ENCODE measurements at regions of chr1 and their contacts with region 1.

Region 1: GRCh38 chr1:101288491-101288944 is 51.7 kb downstream of the S1PR1 start:
- DNase-seq: peak; percentile 60
- H3K4me3 ChIP-seq: peak overlapping the region in 1 of 2 experiments; percentile 16; a peak in 1 of 4 replicates
- H3K27ac ChIP-seq: no peak overlapping the region
- H3K4me1 ChIP-seq: peaks cover 3 to 17% of the 10 kb centered on the region in 2 experiments; a peak in 3 of 4 replicates
- H3K27me3 ChIP-seq: no peaks in the 10 kb centered on the region
- CTCF ChIP-seq: peak; percentile 98
- EP300 ChIP-seq: no peak
- RAD21 ChIP-seq: peak; percentile 93

Region 2: DNA sequence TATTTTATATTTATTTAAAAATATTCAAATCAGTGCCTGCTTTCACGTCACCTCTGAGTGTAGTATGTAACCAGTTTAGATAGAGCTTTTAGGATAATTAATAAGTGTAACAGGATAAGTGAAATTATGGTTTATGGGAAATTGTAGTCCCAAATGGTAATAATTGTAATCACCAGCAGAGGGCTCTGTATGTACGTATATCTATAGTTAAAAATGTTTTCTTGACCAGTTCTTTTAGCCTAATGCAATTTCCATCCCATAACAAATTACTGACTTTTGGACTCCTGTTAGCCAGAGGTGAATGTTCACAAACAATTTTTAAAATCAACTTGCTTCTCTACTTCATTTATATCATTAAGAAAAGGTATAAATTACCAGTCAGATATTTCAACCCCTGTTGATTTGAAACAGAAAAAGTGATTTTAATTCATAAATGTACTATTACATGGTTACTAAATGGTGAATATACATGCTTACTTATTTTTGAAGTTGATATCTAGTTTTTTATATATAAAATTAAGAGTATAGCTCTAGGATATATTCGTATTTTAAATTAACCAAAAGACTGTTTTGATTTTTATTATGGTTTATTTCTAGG is 367.3 kb before region 1 on chr1:
- CTCF ChIA-PET with region 1: interaction called, 67 read pairs
- POLR2A ChIA-PET with region 1: no interaction called
- DNase-seq: peak; percentile 44
- H3K4me3 ChIP-seq: no peak overlapping the region
- H3K27ac ChIP-seq: no peak overlapping the region
- H3K4me1 ChIP-seq: peaks cover 0 to 5% of the 10 kb centered on the region in 2 experiments; a peak in 1 of 4 replicates
- H3K27me3 ChIP-seq: no peaks in the 10 kb centered on the region
- CTCF ChIP-seq: peak; percentile 75
- EP300 ChIP-seq: no peak
- RAD21 ChIP-seq: peak; percentile 80

Region 3: GRCh38 chr1:100936194-100936967 is 352.1 kb before region 1 on chr1:
- CTCF ChIA-PET with region 1: interaction called, 12 read pairs
- POLR2A ChIA-PET with region 1: no interaction called
- DNase-seq: no peak
- H3K4me3 ChIP-seq: no peak overlapping the region
- H3K27ac ChIP-seq: no peak overlapping the region
- H3K4me1 ChIP-seq: no peaks in the 10 kb centered on the region
- H3K27me3 ChIP-seq: no peaks in the 10 kb centered on the region
- CTCF ChIP-seq: no peak
- EP300 ChIP-seq: no peak
- RAD21 ChIP-seq: no peak

Region 4: DNA sequence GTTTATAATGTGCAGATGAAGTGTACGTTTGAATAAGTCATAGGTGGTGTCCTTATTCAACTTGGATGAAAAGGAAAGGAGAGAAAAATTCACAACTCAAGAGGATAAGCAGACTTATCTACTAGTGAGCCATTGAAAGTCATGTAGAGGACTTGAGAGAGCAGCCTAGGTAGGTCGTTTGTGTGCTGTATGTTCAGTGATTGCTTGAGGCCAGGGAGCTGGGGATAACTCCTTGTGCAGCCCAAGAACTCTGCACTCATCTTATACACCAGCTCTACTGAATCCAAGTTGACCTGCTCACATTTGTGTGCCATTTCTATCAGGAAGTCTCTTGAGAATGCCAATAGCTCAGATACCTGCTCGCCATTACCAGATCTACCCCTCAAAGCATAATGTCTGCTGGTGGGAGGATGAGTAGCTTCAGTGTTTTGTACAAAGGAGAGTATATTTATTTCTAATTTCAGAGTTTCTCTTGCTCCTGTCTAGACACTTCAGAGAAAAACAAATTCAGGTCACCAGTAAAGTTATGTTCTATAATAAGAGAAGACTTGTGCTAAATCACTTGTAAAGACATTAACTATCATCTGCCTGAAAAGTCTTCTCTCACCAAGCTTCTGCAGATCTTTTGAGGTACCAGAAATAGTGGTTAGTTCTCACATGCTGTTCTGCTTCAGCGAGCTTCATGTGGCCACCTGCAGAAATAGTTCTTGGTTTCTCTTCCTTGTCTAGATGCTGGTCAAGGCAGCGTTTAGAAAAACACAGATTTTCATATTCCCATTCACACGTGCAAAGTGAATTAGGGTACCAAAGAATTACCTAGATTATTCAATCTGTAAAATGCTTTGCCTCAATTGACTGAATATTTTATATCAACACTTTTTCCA is 40.9 kb before region 1 on chr1:
- CTCF ChIA-PET with region 1: interaction called, 30 read pairs
- POLR2A ChIA-PET with region 1: no interaction called
- DNase-seq: no peak
- H3K4me3 ChIP-seq: no peak overlapping the region
- H3K27ac ChIP-seq: no peak overlapping the region
- H3K4me1 ChIP-seq: no peaks in the 10 kb centered on the region
- H3K27me3 ChIP-seq: no peaks in the 10 kb centered on the region
- CTCF ChIP-seq: no peak
- EP300 ChIP-seq: no peak
- RAD21 ChIP-seq: no peak

Region 5: GRCh38 chr1:101302831-101303511 is 14.5 kb after region 1 on chr1:
- CTCF ChIA-PET with region 1: interaction called, 61 read pairs
- POLR2A ChIA-PET with region 1: no interaction called
- DNase-seq: peak; percentile 39
- H3K4me3 ChIP-seq: no peak overlapping the region
- H3K27ac ChIP-seq: peak overlapping the region; percentile 62 to 71; a peak in 3 of 4 replicates
- H3K4me1 ChIP-seq: peaks cover 8 to 10% of the 10 kb centered on the region in 2 experiments; a peak in 3 of 4 replicates
- H3K27me3 ChIP-seq: no peaks in the 10 kb centered on the region
- CTCF ChIP-seq: no peak
- EP300 ChIP-seq: peak in 1 of 2 experiments; percentile 9; a peak in 1 of 4 replicates
- RAD21 ChIP-seq: no peak